ENCODE measurements at regions of chr2 and their contacts with region 1.

Region 1: GRCh38 chr2:224946895-224947294 is 95.4 kb downstream of the DOCK10 start:
- DNase-seq: no peak
- H3K4me3 Mint-ChIP-seq: peak overlapping the region; percentile 90
- H3K27ac Mint-ChIP-seq: peak overlapping the region; percentile 95
- H3K4me1 Mint-ChIP-seq: peaks cover 65% of the 10 kb centered on the region
- H3K27me3 Mint-ChIP-seq: no peaks in the 10 kb centered on the region

Region 2: DNA sequence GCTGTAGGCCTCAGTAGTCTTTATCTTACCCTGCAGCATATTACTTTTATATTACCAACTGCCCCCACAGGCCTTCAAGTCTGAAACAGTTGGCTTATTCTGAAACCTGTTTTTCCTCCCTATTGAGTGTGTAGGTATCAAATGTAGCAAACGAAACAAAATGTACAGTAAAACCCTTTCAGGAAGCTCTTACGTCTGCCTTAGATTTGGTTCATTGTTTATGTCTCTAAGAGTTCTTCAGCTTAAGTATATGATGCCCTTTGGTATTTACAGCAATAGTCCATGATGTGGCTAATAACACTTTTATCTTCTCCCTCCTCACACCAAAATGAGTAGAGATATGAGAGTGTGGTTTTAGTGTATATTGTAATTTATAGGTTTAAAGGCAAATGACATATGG is 13.5 kb before region 1 on chr2:
- CTCF ChIA-PET with region 1: interaction called, 29 read pairs
- POLR2A ChIA-PET with region 1: interaction called, 209 read pairs
- intact Hi-C with region 1: loop called (anchors 2 kb)
- DNase-seq: no peak
- H3K4me3 Mint-ChIP-seq: peak overlapping the region; percentile 6
- H3K27ac Mint-ChIP-seq: peak overlapping the region; percentile 78
- H3K4me1 Mint-ChIP-seq: peaks cover 93% of the 10 kb centered on the region
- H3K27me3 Mint-ChIP-seq: no peaks in the 10 kb centered on the region

Region 3: DNA sequence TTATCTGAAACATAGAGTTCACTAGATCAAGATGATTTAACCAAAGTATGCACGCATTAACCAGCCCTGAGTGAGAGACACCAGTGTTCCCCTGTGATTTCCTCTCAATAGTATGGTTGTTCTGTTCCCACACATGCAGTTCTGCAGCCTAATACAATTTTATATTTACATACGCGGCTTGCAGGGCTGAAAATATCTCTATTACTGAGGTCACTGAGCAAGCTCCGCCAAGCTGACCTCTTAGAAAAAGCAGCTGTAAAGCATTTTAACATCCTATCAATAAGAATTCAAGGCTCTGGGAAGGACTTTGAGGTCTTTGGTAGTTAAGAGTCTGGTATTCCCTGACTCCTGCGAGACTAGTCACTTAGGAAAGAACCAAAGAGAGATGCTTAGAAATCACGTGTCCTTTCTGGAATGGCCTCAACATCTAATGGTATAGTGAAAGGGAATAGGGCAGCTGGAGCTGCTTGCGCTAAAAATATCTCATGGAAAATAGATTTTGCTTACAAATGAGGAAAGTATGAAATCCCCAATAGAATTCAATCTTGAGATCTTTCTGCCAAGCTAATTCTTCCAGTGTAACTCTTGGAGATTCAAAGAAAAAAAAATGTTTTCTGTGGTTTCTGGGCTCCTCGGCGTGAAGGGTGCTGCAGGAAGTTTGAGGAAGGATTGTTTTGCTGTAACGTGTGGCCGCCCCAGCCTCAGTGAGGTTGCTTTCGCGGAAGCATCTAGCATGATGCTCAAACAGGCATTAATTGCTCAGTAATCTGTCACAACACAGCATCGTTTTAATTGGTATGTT is 36.2 kb after region 1 on chr2:
- CTCF ChIA-PET with region 1: no interaction called
- POLR2A ChIA-PET with region 1: interaction called, 6 read pairs
- intact Hi-C with region 1: loop called (anchors 2 kb)
- DNase-seq: peak; percentile 58
- H3K4me3 Mint-ChIP-seq: peak overlapping the region; percentile 58
- H3K27ac Mint-ChIP-seq: peak overlapping the region; percentile 71
- H3K4me1 Mint-ChIP-seq: peaks cover 71% of the 10 kb centered on the region
- H3K27me3 Mint-ChIP-seq: no peaks in the 10 kb centered on the region